ENCODE measurements at regions of chr3 and their contacts with region 1.

Region 1: DNA sequence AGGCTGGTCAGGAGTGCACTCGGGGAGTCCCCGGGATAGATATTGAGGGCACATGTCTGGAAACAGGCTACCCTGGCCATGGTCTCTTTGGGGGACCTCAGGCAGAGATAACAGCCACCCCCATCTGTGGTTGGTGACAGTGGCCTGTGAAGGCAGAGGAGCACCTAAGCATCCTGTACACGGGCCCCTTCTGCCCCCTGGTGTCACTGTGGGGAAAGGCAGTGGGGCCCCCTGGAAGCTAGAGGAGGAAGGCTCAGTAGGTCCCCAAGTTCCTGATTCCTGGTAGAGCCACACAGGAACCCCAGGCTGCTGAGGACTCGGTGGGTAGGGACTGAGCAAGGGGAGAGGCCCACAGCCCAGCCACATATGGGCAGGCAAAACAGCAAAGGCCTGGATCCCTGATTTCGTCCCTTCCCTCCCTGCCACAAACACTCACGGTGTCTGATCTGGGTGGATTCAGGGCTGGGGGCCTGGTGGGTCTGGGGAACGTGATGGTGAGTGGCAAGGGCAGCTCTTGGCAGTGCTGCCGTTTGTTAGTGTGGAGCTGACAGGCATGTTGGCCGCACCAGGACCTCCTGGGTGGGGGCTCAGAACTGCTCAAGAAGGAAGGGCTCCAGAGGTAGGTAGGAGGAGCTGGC is 14.1 kb upstream of the CXCR6 start:
- DNase-seq: peak; percentile 30
- ATAC-seq: peak; percentile 91
- H3K4me3 ChIP-seq: no peak overlapping the region
- H3K27ac ChIP-seq: no peak overlapping the region
- H3K4me1 ChIP-seq: no peaks in the 10 kb centered on the region
- H3K27me3 ChIP-seq: no peaks in the 10 kb centered on the region
- CTCF ChIP-seq: peak; percentile 83

Region 2: GRCh38 chr3:45132568-45133211 is 796.5 kb before region 1 on chr3:
- CTCF ChIA-PET with region 1: interaction called, 10 read pairs
- POLR2A ChIA-PET with region 1: no interaction called
- in situ Hi-C with region 1: no loop called
- intact Hi-C with region 1: no loop called
- DNase-seq: no peak
- ATAC-seq: no peak
- H3K4me3 ChIP-seq: no peak overlapping the region
- H3K27ac ChIP-seq: no peak overlapping the region
- H3K4me1 ChIP-seq: no peaks in the 10 kb centered on the region; the same call in none of the 2 replicates
- H3K27me3 ChIP-seq: no peaks in the 10 kb centered on the region
- CTCF ChIP-seq: no peak

Region 3: GRCh38 chr3:45516829-45517228 is 412.3 kb before region 1 on chr3:
- CTCF ChIA-PET with region 1: no interaction called
- POLR2A ChIA-PET with region 1: no interaction called
- in situ Hi-C with region 1: no loop called
- intact Hi-C with region 1: loop called (anchors 10 kb)
- DNase-seq: no peak
- ATAC-seq: no peak
- H3K4me3 ChIP-seq: no peak overlapping the region
- H3K27ac ChIP-seq: no peak overlapping the region
- H3K4me1 ChIP-seq: no peaks in the 10 kb centered on the region
- H3K27me3 ChIP-seq: no peaks in the 10 kb centered on the region
- CTCF ChIP-seq: no peak

Region 4: GRCh38 chr3:45760878-45761711 is 168.1 kb before region 1 on chr3:
- CTCF ChIA-PET with region 1: no interaction called
- POLR2A ChIA-PET with region 1: no interaction called
- in situ Hi-C with region 1: no loop called
- intact Hi-C with region 1: loop called (anchors 1 kb)
- DNase-seq: peak; percentile 56
- ATAC-seq: peak; percentile 94
- H3K4me3 ChIP-seq: peak overlapping the region in 1 of 2 experiments; percentile 16; a peak in 1 of 4 replicates
- H3K27ac ChIP-seq: no peak overlapping the region
- H3K4me1 ChIP-seq: no peaks in the 10 kb centered on the region
- H3K27me3 ChIP-seq: no peaks in the 10 kb centered on the region
- CTCF ChIP-seq: peak; percentile 87

Region 5: DNA sequence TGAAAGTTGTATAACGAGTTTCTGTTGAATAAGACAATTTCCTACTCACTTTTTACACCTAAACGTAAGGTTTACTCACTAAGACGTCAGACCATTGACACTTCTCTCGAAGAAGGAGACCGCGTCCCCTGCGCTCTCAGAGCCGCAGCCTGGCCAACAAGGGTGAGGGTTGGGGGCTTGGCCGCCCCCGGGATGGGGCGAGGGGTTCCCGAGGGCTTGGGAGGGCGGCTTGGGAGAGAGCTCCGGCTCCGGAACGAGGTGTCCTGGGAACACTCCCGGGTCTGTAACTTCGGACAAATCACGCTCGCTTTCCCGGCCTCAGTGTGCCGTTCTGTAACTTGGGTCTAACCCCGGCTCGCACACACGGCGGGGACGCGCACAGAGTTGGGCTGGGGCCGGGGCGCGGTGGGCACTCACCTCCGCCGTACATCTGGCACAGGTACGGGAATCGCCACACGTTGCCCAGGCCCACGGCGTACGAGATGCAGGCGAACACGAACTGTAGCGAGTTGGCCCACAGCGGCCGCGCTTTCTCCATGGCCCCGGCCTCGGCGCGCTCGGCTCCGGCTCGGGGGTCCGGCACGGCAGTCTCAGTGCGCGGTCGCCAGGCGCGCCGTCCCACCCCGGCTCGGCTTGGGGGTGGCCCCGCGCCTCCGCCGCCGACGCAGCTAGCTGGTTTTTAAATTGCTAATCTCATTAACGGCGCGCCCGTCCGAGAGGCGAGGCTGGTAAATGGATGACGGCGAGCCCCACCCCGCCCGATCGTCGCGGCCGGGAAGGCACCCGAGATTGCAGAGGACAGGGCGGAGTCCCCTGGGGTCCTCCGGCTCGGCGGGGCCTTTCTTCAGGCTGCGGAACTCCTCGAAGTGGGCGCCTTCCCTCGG is 133.0 kb before region 1 on chr3 and contains the start of gene SLC6A20:
- CTCF ChIA-PET with region 1: interaction called, 10 read pairs
- POLR2A ChIA-PET with region 1: no interaction called
- in situ Hi-C with region 1: no loop called
- intact Hi-C with region 1: no loop called
- DNase-seq: no peak
- ATAC-seq: peak; percentile 60
- H3K4me3 ChIP-seq: peak within 1 kb of the TSS; percentile 39
- H3K27ac ChIP-seq: no peak within 1 kb of the TSS
- H3K4me1 ChIP-seq: peaks cover 7% of the 10 kb centered on the region; the same call in 1 of the 2 replicates
- H3K27me3 ChIP-seq: peaks cover 20% of the 10 kb centered on the region
- CTCF ChIP-seq: no peak
- total RNA-seq, gene SLC6A20: 0.28 TPM